ENCODE measurements at regions of chr2 and their contacts with region 1.

Region 1: DNA sequence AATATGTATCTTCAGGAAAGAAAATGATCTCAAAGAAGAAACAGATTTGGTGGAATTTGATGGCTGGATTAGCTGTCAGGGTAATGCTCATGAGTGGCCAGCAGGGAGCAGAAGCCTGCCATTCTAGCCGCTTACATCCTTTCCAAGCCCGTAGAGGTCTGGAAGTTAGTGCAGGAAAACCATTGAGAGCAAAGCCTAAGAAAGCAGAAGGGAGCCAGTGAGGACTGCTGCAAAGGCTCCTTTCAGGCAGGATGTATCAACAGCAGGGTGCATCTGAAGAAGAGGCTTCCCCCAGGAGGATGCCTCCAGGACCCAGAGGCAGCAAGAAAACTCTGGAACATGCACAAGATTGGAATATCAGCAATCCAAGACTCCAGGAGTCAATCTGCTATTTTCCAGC is 22.9 kb upstream of the LBH start:
- DNase-seq: no peak
- ATAC-seq: peak; percentile 62
- H3K4me3 Mint-ChIP-seq: no peak overlapping the region
- H3K27ac Mint-ChIP-seq: peak overlapping the region; percentile 20
- H3K4me1 Mint-ChIP-seq: peaks cover 18% of the 10 kb centered on the region
- H3K27me3 Mint-ChIP-seq: no peaks in the 10 kb centered on the region
- CTCF ChIP-seq: peak; percentile 82

Region 2: GRCh38 chr2:29446847-29447246 is 761.6 kb before region 1 on chr2:
- CTCF ChIA-PET with region 1: no interaction called
- POLR2A ChIA-PET with region 1: no interaction called
- intact Hi-C with region 1: no loop called
- DNase-seq: no peak
- ATAC-seq: no peak
- H3K4me3 Mint-ChIP-seq: no peak overlapping the region
- H3K27ac Mint-ChIP-seq: no peak overlapping the region
- H3K4me1 Mint-ChIP-seq: no peaks in the 10 kb centered on the region
- H3K27me3 Mint-ChIP-seq: no peaks in the 10 kb centered on the region
- CTCF ChIP-seq: no peak

Region 3: GRCh38 chr2:30225131-30225762 is 16.8 kb after region 1 on chr2:
- CTCF ChIA-PET with region 1: interaction called, 90 read pairs
- POLR2A ChIA-PET with region 1: interaction called, 40 read pairs
- intact Hi-C with region 1: loop called (anchors 1 kb)
- DNase-seq: no peak
- ATAC-seq: peak; percentile 64
- H3K4me3 Mint-ChIP-seq: peak overlapping the region; percentile 90
- H3K27ac Mint-ChIP-seq: peak overlapping the region; percentile 99
- H3K4me1 Mint-ChIP-seq: peaks cover 63% of the 10 kb centered on the region
- H3K27me3 Mint-ChIP-seq: no peaks in the 10 kb centered on the region
- CTCF ChIP-seq: no peak

Region 4: DNA sequence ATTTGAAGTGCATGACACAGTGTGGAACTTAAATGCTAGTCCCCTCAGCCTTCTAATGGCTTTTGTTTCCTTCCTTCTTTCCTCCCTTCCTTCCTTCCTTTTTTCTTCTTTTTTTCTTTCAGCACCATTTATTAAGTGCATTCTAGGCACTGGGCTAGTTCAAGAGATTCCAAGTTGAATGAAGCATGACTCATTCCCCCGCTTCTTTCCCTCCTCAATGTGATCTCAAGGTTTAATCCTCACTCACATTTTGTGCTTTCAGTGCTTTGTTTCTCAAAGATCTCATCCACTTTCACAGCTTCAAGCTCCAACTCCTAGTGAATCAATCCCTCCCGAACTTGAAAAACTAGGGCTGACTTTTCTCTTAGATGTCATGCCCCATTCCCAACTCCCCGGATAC is 113.0 kb after region 1 on chr2:
- CTCF ChIA-PET with region 1: no interaction called
- POLR2A ChIA-PET with region 1: interaction called, 11 read pairs
- intact Hi-C with region 1: no loop called
- DNase-seq: no peak
- ATAC-seq: no peak
- H3K4me3 Mint-ChIP-seq: no peak overlapping the region
- H3K27ac Mint-ChIP-seq: no peak overlapping the region
- H3K4me1 Mint-ChIP-seq: peaks cover 47% of the 10 kb centered on the region
- H3K27me3 Mint-ChIP-seq: no peaks in the 10 kb centered on the region
- CTCF ChIP-seq: no peak

Region 5: DNA sequence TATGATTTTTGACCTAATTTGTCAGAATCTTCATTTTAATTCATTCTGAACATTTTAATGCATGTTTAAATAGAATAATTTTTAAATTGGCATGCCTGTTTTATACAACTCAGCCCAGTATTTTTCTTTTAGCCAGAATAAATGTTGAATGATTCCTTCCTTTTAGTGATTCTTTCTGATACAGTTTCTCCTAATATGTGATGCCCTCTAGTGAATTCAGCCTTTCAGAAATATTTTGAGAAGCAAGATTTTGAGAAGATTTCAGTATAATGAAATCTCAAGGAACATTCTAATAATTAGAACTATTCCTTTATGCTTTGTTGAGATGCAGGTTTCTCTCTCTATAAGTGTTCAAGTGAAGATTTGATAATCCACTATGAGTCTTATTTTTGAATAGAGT is 267.1 kb after region 1 on chr2:
- CTCF ChIA-PET with region 1: interaction called, 67 read pairs
- POLR2A ChIA-PET with region 1: interaction called, 7 read pairs
- intact Hi-C with region 1: loop called (anchors 1 kb)
- DNase-seq: no peak
- ATAC-seq: no peak
- H3K4me3 Mint-ChIP-seq: no peak overlapping the region
- H3K27ac Mint-ChIP-seq: no peak overlapping the region
- H3K4me1 Mint-ChIP-seq: peaks cover 37% of the 10 kb centered on the region
- H3K27me3 Mint-ChIP-seq: no peaks in the 10 kb centered on the region
- CTCF ChIP-seq: no peak

Region 6: DNA sequence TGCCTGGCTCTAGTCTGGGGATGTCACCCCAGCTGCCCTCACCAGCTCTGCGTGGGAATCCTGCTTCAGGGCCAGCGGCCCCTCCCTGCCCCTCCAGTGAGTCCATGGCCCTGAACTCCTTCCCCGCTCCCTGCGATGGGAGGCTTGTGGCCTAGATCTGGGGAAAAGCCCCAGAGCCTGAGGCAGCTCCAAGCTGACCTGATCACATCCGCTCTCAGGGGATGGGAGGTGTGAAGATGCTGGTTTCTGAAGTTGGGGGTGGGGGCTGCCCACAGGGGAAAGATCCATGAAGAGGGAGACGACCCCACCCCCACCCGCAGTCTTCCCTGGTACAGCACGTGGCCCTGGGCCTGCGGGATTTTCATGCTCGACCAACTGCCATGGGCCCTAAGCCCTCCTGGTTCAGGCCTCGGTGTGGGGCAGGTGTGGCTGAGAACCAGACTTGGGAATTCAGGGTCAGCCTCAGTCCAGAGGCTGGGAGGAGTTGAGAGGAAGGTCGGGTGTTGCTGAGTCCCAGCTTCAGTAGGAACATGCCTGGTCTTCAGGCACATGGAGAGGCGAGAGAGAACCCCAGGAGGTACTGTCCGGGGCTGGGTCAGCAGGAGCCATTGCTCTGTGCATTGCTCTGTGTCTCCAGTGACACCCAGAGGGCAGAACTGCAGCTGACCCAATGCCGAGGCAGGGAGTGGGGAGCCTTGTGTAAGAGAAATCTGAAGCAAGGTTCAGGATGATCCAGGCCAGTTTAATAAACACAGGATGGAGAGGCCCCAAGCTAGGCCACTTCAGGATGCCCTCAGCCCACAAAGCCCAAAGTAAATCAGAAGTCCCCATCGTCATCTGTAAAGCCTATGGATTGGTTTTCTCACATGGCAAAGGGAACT is 483.7 kb after region 1 on chr2:
- CTCF ChIA-PET with region 1: interaction called, 22 read pairs
- POLR2A ChIA-PET with region 1: no interaction called
- intact Hi-C with region 1: no loop called
- DNase-seq: no peak
- ATAC-seq: no peak
- H3K4me3 Mint-ChIP-seq: no peak overlapping the region
- H3K27ac Mint-ChIP-seq: no peak overlapping the region
- H3K4me1 Mint-ChIP-seq: no peaks in the 10 kb centered on the region
- H3K27me3 Mint-ChIP-seq: peaks cover 1% of the 10 kb centered on the region
- CTCF ChIP-seq: no peak

Measured in activated B cell treated with CpG ODN at 0.5 μM for 24 hours (primary cell).